ENCODE measurements at regions of chr6 and their contacts with region 1.

Region 1: GRCh38 chr6:100001915-100002388 is 7.9 kb upstream of the MCHR2 start:
- DNase-seq: peak; percentile 81
- H3K4me3 ChIP-seq: no peak overlapping the region
- H3K27ac ChIP-seq: no peak overlapping the region
- H3K4me1 ChIP-seq: peaks cover 3% of the 10 kb centered on the region
- H3K27me3 ChIP-seq: peaks cover 27% of the 10 kb centered on the region

Region 2: GRCh38 chr6:99871641-99872040 is 130.3 kb before region 1 on chr6:
- in situ Hi-C with region 1: loop called (anchors 5 kb)
- DNase-seq: no peak
- H3K4me3 ChIP-seq: no peak overlapping the region
- H3K27ac ChIP-seq: no peak overlapping the region
- H3K4me1 ChIP-seq: no peaks in the 10 kb centered on the region; the same call in 1 of the 2 replicates
- H3K27me3 ChIP-seq: peaks cover 22% of the 10 kb centered on the region; the same call in 1 of the 2 replicates

Region 3: DNA sequence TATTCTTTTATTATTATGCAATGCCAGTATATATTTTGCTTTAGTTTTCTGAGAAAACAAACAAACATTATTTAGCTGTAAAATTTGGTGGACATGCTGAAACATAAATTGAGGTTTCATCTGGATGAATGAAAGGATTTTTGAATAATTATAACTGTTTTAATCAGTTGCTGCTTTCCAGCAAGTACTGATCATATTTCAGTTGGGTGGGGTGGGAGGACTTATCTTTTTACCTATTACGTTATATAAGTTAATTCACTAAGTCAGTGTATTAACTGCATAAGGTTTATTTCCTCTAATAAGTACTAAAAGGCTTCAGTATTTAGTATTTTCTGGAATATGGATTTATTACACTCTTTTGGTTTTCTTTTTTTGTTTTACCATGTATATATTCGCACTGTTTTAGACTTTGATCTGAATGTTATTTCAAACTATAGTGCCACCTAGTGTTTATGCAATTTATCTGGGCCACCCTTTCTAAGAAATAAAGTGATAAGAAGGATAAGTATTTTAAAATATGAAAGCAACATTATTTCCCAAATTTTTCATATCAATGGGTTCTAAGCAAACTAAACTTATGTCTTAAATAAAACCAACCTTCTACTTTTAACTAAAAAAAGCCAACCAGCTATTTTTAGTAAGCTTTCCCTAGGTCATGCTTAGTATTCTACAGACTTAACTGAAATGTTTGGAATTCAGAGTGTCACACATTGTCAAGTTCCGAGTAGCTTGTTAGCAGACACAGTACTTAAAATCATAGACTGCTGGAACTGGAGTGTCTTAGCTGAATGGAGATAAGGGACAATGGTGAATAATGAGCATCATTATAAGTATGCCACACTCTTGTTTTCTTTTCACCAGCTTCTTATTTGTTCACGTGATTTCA is 97.5 kb after region 1 on chr6:
- in situ Hi-C with region 1: loop called (anchors 5 kb)
- DNase-seq: peak; percentile 67
- H3K4me3 ChIP-seq: no peak overlapping the region
- H3K27ac ChIP-seq: no peak overlapping the region
- H3K4me1 ChIP-seq: peaks cover 14% of the 10 kb centered on the region
- H3K27me3 ChIP-seq: no peaks in the 10 kb centered on the region

Region 4: GRCh38 chr6:101445527-101445926 is 1443.6 kb after region 1 on chr6:
- in situ Hi-C with region 1: no loop called
- DNase-seq: peak; percentile 62
- H3K4me3 ChIP-seq: no peak overlapping the region
- H3K27ac ChIP-seq: no peak overlapping the region
- H3K4me1 ChIP-seq: 0 out of 2 replicates have a peak, but pooled peaks cover 5% of the 10 kb centered on the region
- H3K27me3 ChIP-seq: no peaks in the 10 kb centered on the region